Esophagus muscularis mucosa (tissue), 4 donors: ENCODE measurements at regions of chr5 and their contacts with region 1.

Region 1: DNA sequence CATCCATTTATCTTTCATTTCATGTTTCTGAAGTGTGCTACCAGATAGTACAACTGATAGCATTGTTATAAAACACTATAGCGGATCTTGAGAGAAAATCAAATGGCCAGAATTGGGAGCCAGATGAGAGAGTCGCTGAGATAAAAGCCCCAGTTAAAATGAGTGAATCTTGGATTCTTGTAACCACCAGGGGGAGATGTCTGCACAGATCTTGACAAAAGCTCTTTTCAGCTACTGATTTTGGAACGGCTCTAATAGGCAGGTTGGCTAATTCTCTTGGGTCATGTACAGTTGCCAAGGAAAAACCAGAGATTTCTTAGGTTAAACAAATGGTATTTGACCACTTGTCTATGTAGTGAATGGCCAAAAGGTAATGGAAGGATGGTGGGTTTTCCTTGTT is 21.7 kb downstream of the F2RL2 start:
- DNase-seq: no peak
- H3K4me3 ChIP-seq: no peak overlapping the region
- H3K27ac ChIP-seq: no peak overlapping the region
- H3K4me1 ChIP-seq: peaks cover 0 to under 1% (median 0%) of the 10 kb centered on the region in 4 donors
- H3K27me3 ChIP-seq: no peaks in the 10 kb centered on the region
- CTCF ChIP-seq: peak; percentile 51 to 62 (median 56)
- EP300 ChIP-seq: no peak
- POLR2A ChIP-seq: no peak

Region 2: DNA sequence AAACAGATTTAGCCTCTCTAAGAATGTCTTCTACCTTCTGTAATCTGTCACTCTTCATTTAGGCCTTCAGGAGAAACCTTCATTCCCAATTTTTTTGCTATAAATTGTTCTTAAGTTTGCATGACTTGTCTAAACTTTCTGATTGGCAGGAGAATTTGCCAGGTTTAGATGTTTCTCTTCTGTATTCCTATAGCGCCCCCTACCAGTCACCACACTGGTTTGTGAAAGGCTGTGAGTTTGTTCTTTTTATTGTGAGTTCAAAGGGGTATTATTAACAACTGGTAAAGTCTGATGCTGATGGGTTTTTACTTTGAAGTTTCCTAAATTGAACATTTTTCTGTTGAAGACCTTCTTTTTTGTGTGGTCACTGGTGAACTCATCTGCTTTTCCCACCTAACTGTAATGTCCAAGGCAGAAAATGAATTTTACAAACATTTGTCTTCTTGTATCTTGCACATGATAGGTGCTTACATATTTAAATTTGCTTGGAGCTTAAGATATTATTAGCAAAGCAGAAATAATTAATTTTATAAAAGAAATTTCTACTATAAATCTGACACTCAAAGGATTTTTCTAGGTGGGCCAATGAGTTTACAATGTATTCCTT is 40.1 kb after region 1 on chr5:
- intact Hi-C with region 1: loop called (anchors 2 kb)
- DNase-seq: no peak
- H3K4me3 ChIP-seq: no peak overlapping the region
- H3K27ac ChIP-seq: no peak overlapping the region
- H3K4me1 ChIP-seq: no peaks in the 10 kb centered on the region
- H3K27me3 ChIP-seq: no peaks in the 10 kb centered on the region
- CTCF ChIP-seq: peak; percentile 41 to 52 (median 43)
- EP300 ChIP-seq: no peak
- POLR2A ChIP-seq: no peak

Region 3: DNA sequence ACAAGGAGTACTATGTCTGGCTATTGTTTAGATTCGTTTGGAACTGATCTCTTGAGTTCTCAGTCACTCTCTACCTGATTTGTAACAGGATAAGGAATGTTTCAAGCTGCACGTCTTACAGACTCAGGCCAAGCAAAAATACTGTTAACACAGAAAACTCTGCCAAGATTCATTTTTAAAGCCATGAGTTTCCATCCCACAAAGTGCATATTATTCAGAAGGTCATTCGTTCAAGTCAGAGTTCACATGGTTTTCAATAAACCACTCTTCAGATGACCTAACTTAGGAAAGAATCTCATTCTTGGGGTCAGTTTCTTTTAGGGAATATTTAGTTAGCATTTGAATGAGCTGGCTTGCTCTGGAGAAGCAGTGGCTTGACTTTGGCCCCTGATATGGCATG is 163.8 kb after region 1 on chr5:
- intact Hi-C with region 1: no loop called
- DNase-seq: no peak
- H3K4me3 ChIP-seq: no peak overlapping the region
- H3K27ac ChIP-seq: no peak overlapping the region
- H3K4me1 ChIP-seq: no peaks in the 10 kb centered on the region
- H3K27me3 ChIP-seq: no peaks in the 10 kb centered on the region
- CTCF ChIP-seq: no peak
- EP300 ChIP-seq: no peak
- POLR2A ChIP-seq: no peak

Region 4: GRCh38 chr5:76775921-76776320 is 174.5 kb after region 1 on chr5:
- intact Hi-C with region 1: loop called (anchors 5 kb)
- DNase-seq: no peak
- H3K4me3 ChIP-seq: no peak overlapping the region
- H3K27ac ChIP-seq: no peak overlapping the region
- H3K4me1 ChIP-seq: peaks cover 0 to 3% (median 0%) of the 10 kb centered on the region in 4 donors
- H3K27me3 ChIP-seq: no peaks in the 10 kb centered on the region
- CTCF ChIP-seq: no peak
- EP300 ChIP-seq: no peak
- POLR2A ChIP-seq: no peak

Region 5: DNA sequence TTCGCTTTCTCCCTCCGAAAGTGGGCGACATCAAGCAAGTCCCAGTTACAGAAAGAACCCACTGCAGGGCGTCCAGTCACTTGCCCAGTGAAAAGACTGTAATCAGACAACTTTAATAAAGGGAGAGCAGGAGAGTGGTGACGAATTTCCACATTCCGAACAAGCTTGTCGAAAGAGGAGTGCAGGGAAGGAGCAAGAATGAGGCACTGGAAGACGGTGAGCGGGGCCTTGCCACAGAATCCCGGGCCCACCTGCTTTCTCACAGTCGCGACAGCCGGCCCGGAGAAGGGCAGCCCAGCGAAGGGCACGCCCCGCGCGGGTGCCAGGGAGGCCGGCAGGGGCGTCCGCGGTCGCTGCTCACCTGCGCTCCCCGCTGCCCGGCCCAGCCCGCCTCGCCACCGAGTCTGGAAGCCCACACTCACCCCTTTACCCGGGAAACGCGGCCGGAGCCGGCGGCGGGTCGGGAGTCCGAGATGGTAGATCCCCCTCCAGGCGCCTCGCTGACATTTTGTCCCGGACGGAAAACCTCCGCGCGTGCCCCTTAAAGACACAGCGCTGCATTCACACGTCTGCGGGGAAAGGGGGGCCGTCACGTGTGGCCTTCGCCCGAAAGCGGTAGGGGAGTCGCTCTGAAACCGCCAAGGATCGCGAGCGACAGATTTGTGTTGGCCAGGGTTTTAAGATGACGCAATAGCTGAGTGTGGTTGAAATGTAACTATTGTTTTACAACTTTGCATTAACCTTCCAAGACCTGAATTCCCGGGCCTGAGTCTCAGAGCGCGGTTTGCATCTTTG is 485.4 kb after region 1 on chr5 and contains the start of gene ZBED3:
- intact Hi-C with region 1: loop called (anchors 10 kb)
- DNase-seq: no peak
- H3K4me3 ChIP-seq: peak within 1 kb of the TSS; percentile 82 to 92 (median 90)
- H3K27ac ChIP-seq: peak within 1 kb of the TSS; percentile 90 to 96 (median 94)
- H3K4me1 ChIP-seq: peaks cover 14 to 24% (median 20%) of the 10 kb centered on the region in 4 donors
- H3K27me3 ChIP-seq: no peaks in the 10 kb centered on the region
- CTCF ChIP-seq: peak in 2 of 3 experiments; percentile 8 to 35
- EP300 ChIP-seq: no peak
- POLR2A ChIP-seq: no peak
- total RNA-seq, gene ZBED3: 5.4 to 15.0 (median 8.9) TPM